ENCODE measurements at regions of chr9 and their contacts with region 1.

Region 1: DNA sequence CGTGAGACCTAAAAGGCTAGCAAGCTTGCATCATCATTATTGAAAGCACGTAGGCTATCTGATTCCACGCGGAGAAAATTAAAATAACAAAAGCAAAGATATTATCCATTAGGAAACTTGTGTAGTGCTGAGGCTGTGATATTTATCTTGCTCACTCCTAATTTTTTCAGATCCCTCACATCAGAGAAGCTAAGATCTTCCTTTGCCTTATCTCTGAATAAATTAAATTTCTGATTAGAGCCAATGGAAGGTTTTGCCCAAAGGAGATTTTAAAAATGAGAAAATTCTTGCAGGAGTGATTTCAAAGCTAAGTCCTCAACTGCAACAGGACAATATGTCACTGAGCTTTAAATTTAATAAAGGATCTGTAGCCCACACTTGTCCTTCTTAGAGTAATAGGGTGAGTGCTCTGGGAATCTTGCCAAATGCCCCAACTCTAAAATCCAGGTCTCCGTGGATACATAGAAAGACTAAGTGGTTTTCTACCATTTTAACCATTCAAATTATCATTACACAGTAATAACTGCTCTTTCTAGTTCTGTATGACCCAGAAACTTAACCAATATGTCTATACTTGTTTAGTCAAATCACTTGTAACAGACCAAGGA is 295.0 kb downstream of the CAAP1 start:
- DNase-seq: no peak
- ATAC-seq: no peak
- H3K4me3 ChIP-seq: no peak overlapping the region
- H3K27ac ChIP-seq: no peak overlapping the region
- H3K4me1 ChIP-seq: no peaks in the 10 kb centered on the region
- H3K27me3 ChIP-seq: no peaks in the 10 kb centered on the region
- CTCF ChIP-seq: no peak

Region 2: GRCh38 chr9:27059907-27060306 is 462.3 kb after region 1 on chr9:
- CTCF ChIA-PET with region 1: interaction called, 14 read pairs
- POLR2A ChIA-PET with region 1: no interaction called
- intact Hi-C with region 1: no loop called
- DNase-seq: no peak
- ATAC-seq: no peak
- H3K4me3 ChIP-seq: no peak overlapping the region
- H3K27ac ChIP-seq: no peak overlapping the region
- H3K4me1 ChIP-seq: no peaks in the 10 kb centered on the region
- H3K27me3 ChIP-seq: no peaks in the 10 kb centered on the region
- CTCF ChIP-seq: no peak